Mammary epithelial cell (primary cell): ENCODE measurements at regions of chr19 and their contacts with region 1.

Region 1: DNA sequence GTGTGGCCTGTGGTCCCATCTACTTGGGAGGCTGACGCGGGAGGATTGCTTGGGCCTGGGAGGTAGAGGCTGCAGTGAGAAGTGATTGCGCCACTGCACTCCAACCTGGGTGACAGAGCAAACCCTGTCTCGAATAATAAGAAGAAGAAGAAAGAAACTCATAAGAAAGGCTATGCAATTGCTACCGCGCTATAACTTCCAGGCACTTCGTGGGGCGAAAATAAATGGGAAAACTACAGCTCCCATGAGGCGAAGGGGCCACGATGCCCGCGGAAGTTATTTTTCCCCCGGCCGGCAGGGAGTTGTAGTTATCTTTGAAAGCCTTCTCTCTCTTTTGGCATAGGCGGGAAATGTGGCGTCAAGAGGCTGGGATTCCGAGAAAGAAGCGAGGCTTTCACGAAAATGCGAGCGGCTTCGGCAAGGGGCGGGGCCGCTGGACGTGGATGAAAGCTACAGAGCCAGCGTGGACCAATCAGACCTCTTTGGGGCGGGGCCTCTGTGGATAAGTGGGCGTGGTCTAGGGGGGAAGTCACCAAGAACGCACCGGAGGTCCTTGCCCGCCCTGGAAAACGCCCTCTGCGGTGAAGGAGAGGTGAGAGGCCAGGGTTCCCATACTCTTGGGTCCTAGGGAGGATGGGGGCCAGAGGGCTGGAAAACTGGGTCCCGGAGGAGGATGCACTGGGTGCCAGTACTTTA is at the start of gene NUCB1:
- DNase-seq: peak; percentile 98
- H3K4me3 ChIP-seq: peak within 1 kb of the TSS; percentile 79 to 90 (median 83)
- H3K27ac ChIP-seq: peak within 1 kb of the TSS; percentile 82
- H3K4me1 ChIP-seq: peaks cover 3% of the 10 kb centered on the region
- H3K27me3 ChIP-seq: peaks cover 3% of the 10 kb centered on the region
- CTCF ChIP-seq: peak in 1 of 2 donors; percentile 48
- total RNA-seq, gene NUCB1: 132 to 133 TPM

Region 2: GRCh38 chr19:48881741-48882657 is 17.9 kb before region 1 on chr19:
- CTCF ChIA-PET with region 1: interaction called, 3 read pairs
- dilution Hi-C with region 1: no loop called
- in situ Hi-C with region 1: no loop called
- intact Hi-C with region 1: loop called (anchors 2 kb)
- DNase-seq: peak; percentile 26
- H3K4me3 ChIP-seq: no peak overlapping the region
- H3K27ac ChIP-seq: no peak overlapping the region
- H3K4me1 ChIP-seq: no peaks in the 10 kb centered on the region
- H3K27me3 ChIP-seq: no peaks in the 10 kb centered on the region
- CTCF ChIP-seq: no peak

Region 3: DNA sequence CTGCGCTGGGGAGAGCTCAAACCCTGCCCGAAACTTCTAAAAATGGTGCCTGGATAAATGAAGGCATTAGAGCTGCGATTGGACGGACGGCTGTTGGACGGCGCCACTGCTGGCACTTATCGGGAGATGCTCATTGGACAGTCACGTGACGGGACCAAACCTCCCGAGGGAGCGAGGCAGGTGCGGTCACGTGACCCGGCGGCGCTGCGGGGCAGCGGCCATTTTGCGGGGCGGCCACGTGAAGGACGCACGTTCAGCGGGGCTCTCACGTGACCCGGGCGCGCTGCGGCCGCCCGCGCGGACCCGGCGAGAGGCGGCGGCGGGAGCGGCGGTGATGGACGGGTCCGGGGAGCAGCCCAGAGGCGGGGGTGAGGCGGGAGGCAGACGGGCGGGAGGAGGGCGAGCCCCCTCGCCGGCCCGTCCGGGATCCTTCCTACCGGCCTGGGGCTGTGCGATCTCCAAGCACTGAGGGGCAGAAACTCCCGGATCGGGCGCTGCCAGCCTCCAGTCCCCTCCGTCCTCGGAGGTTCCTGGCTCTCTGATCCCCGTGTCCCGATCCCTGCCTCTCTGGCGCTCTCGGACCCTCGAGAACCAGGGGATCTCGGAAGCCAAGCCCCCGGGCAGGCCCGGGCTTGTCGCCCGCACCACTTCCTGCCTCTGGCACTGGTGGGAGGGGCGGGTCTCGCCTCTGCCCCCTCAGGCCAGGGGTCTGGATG is 54.8 kb after region 1 on chr19 and contains the start of gene BAX:
- CTCF ChIA-PET with region 1: no interaction called
- dilution Hi-C with region 1: no loop called
- in situ Hi-C with region 1: no loop called
- intact Hi-C with region 1: loop called (anchors 2 kb)
- DNase-seq: peak; percentile 94
- H3K4me3 ChIP-seq: peak within 1 kb of the TSS; percentile 57 to 91 (median 70)
- H3K27ac ChIP-seq: peak within 1 kb of the TSS; percentile 63
- H3K4me1 ChIP-seq: peaks cover 14% of the 10 kb centered on the region
- H3K27me3 ChIP-seq: no peaks in the 10 kb centered on the region
- CTCF ChIP-seq: no peak
- total RNA-seq, gene BAX: 53.7 to 180 TPM

Region 4: DNA sequence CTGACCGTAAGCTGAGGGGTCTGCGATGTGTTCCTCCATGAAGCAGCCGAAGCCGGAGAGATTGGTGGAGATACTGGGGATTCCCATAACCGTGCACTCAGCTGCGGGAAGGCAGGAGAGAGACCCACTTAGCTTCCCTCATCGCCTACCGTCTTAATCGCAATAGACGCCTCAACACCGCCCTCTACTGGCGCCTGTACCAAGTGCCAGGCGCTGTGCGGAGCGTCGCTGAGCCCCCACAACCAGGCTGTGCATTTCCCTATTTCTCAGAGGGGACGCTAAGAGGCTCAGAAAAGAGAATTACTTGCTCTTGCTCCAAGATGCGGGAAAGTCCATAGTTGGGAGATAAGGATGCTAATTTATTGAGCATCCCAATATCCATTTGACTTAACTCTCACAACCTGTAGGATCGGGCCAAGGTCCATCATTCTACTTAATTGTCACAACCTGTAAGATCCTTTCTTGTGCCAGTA is 71.0 kb after region 1 on chr19:
- CTCF ChIA-PET with region 1: no interaction called
- dilution Hi-C with region 1: loop called (anchors 5 kb)
- in situ Hi-C with region 1: no loop called
- intact Hi-C with region 1: loop called (anchors 2 kb)
- DNase-seq: no peak
- H3K4me3 ChIP-seq: no peak overlapping the region
- H3K27ac ChIP-seq: no peak overlapping the region
- H3K4me1 ChIP-seq: peaks cover 5% of the 10 kb centered on the region
- H3K27me3 ChIP-seq: no peaks in the 10 kb centered on the region
- CTCF ChIP-seq: peak; percentile 92 to 93